Activated naive CD8-positive, alpha-beta T cell treated with anti-CD3 and anti-CD28 coated beads, Interleukin-2, amount 10 ng/mL, durations not matched to agents 7 days and 5 days (primary cell): ENCODE measurements at regions of chr16 and their contacts with region 1.

Region 1: DNA sequence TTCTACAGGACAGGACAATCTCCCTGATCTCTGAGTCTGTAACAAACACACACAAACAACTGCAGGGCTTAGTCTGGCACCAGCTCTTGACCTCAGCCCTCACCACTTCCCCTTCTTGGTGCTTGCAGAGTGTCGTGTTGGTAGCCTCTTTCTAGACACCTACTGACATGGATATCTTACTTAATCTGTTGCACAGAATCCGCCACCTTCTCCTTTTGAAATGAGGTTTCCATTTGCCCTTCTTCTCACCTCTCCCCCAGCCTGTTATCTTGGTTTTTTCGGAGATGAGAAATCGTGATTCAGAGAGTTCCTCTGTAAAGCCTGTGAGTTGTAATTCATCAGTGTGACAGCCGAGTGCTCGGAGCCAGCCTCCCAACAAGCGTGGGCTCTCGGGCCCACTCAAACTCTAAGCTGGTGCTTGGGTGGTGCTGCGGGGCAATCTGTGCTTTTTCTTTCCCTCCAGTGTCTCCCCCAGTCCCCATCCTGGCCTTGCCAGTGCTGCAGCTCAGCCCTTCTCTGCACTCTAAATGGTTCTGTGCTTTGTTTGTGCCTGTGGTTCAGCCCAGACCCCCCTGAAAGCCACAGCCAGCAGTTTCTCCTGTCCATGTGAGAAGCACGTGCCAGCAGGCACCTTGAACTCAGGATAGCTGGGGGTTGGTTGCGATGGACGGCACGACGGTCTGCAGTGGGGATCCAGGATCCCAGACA is 28.1 kb downstream of the KIAA0513 start:
- DNase-seq: peak; percentile 69
- ATAC-seq: peak; percentile 97
- H3K4me3 Mint-ChIP-seq: peak overlapping the region; percentile 82
- H3K27ac Mint-ChIP-seq: peak overlapping the region; percentile 98
- H3K4me1 Mint-ChIP-seq: peaks cover 31% of the 10 kb centered on the region
- H3K27me3 Mint-ChIP-seq: no peaks in the 10 kb centered on the region

Region 2: DNA sequence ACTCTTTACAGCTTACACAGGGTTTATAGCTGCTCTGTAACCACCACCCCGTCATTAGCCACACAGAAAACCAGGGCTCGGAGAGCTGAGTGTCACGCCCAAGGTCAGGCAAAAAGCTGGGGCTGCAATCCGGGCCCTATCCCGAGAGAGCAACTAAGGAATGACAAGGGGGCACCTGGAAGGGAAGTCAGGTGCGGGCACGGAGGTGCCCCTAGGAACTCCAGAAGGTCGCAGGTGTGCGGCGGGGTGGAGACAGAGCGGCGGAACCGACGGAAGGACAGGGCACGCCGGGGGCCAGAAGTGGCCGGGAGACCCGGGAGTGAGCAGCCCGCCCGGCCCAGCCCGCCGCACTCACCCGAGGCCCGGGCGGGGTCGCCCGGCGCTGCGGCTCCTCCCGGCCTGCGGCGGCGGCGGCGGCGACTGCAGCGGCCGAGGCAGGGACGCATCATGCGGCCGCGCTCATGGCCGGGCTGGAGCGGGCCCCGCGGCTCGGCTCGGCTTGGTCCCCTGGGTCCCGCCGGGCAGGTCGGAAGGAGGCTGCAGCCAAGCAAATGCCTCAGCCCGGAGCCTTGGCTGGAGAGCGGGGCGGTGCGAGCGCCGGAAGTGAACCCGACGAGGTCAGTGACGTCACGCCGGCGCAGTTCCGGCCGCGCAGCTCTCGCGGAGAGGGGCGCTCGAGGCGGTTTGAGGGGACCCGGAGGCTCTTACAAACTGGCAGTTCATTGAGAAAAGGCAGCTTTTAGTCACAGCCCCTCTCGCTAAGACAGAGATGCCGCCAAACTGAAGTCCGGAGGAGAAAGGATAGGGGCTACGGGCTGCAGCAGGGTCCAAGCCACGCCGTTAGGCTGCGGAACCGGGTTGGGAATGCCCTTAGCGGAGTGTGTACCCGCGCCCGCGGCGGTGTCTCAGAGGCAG is 44.5 kb before region 1 on chr16 and contains the start of gene ZDHHC7:
- POLR2A ChIA-PET with region 1: interaction called, 15 read pairs
- DNase-seq: peak; percentile 90
- ATAC-seq: peak; percentile 91
- H3K4me3 Mint-ChIP-seq: peak within 1 kb of the TSS; percentile 95
- H3K27ac Mint-ChIP-seq: peak within 1 kb of the TSS; percentile 97
- H3K4me1 Mint-ChIP-seq: peaks cover 17% of the 10 kb centered on the region
- H3K27me3 Mint-ChIP-seq: no peaks in the 10 kb centered on the region
- total RNA-seq, gene ZDHHC7: 30.5 to 33.7 TPM

Region 3: DNA sequence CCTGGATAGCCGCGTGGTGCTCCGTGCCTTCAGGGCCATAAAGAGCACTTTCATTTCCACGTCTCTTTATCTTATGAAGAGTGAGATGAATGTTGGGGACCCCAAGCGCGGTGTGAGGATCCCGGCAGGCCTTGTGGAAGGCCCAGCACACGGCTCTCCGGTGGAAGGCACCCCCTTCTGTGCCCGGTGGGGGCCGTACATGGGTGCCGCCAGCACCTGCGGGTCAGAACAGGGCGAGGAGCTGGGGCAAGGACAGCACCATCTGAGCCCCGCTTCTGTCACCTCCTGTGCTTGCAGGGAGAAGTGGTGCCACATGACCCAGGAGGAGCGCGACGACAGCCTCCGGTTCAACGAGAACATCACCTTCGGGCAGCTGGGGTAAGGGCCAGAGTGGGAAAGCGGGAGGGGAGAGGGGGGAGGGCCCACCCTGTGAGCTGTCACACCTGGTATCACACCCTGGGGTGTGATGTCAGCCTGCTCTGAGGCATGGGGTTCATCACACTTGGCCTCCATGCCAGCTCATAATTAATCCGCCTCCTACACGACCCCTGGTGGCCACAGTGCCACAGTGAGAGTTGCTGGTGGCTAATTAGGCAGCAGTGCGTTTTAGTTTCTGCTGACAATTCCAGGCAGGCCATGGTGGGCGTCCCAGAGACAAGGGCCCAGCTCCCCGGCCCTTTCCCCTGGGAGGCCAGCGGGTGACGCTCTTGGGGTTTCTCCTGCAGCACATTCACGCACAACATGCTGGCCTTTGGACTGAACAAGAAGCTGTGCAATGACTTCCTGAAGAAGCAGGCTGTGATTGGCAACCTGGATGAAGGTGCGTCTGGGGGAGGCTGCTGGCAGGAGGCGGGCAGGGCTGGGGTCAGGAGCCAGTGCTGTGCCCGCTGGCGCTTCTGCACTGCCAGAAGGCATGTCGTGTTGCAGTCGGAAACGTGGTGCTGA is 31.0 kb after region 1 on chr16:
- POLR2A ChIA-PET with region 1: interaction called, 13 read pairs
- DNase-seq: peak; percentile 84
- ATAC-seq: peak; percentile 93
- H3K4me3 Mint-ChIP-seq: no peak overlapping the region
- H3K27ac Mint-ChIP-seq: no peak overlapping the region
- H3K4me1 Mint-ChIP-seq: peaks cover 8% of the 10 kb centered on the region
- H3K27me3 Mint-ChIP-seq: peaks cover 1% of the 10 kb centered on the region

Region 4: GRCh38 chr16:85234310-85235204 is 178.9 kb after region 1 on chr16:
- POLR2A ChIA-PET with region 1: no interaction called
- DNase-seq: no peak
- ATAC-seq: no peak
- H3K4me3 Mint-ChIP-seq: no peak overlapping the region
- H3K27ac Mint-ChIP-seq: no peak overlapping the region
- H3K4me1 Mint-ChIP-seq: no peaks in the 10 kb centered on the region
- H3K27me3 Mint-ChIP-seq: peaks cover 26% of the 10 kb centered on the region